T-cell (primary cell): ENCODE measurements at regions of chr2 and their contacts with region 1.

Region 1: DNA sequence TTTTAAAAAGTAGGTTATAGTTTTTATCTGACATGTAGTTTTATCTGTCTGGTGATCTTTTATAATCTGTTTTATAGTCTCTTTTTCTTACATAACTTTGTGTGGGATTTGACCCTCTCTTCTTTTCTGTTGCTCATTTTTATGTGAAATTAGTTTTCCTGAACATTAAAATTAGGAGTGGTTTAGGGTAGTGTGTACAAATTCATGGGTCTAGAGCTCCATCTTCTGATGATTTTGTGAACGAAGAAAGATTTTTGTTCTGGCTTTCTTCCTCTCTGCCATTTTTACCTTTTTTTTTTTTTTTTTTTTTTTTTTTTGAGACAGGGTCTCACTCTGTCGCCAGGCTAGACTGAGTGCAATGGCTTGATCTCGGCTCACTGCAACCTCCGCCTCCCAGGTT is 46.6 kb downstream of the SLC30A6 start:
- DNase-seq: peak in 1 of 35 experiments; percentile 8
- ATAC-seq: no peak
- H3K4me3 ChIP-seq: no peak overlapping the region
- H3K4me3 Mint-ChIP-seq: no peak overlapping the region
- H3K27ac ChIP-seq: no peak overlapping the region
- H3K27ac Mint-ChIP-seq: no peak overlapping the region
- H3K4me1 ChIP-seq: no peaks in the 10 kb centered on the region
- H3K4me1 Mint-ChIP-seq: no peaks in the 10 kb centered on the region
- H3K27me3 ChIP-seq: no peaks in the 10 kb centered on the region
- H3K27me3 Mint-ChIP-seq: no peaks in the 10 kb centered on the region

Region 2: DNA sequence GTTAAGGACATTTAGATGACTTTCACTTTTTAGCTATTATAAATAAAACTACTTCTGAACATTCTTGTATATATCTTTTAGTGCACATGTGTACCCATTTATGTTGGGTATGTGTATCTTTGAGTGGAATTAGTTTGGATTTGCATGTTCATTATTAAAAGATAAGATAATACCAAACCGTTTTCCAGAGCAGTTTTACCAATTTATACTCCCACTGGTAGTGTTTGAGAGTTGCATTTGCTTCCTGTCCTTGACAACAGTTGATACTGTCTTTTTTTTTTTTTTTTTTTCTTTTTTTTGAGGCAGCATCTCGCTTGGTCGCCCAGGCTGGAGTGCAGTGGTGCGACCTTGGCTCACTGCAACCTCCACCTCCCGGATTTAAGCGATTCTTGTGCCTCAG is 23.3 kb before region 1 on chr2:
- CTCF ChIA-PET with region 1: interaction called, 4 to 11 read pairs
- POLR2A ChIA-PET with region 1: no interaction called
- DNase-seq: no peak
- ATAC-seq: no peak
- H3K4me3 ChIP-seq: no peak overlapping the region
- H3K4me3 Mint-ChIP-seq: no peak overlapping the region
- H3K27ac ChIP-seq: no peak overlapping the region
- H3K27ac Mint-ChIP-seq: no peak overlapping the region
- H3K4me1 ChIP-seq: peaks cover 0 to 6% of the 10 kb centered on the region in 2 experiments
- H3K4me1 Mint-ChIP-seq: peaks cover 21 to 27% (median 25%) of the 10 kb centered on the region in 3 donors
- H3K27me3 ChIP-seq: no peaks in the 10 kb centered on the region
- H3K27me3 Mint-ChIP-seq: no peaks in the 10 kb centered on the region